ENCODE measurements at regions of chr3 and their contacts with region 1.

Region 1: GRCh38 chr3:194682694-194683310 is 2.9 kb upstream of the FAM43A start:
- DNase-seq: peak; percentile 86
- ATAC-seq: peak; percentile 55
- H3K4me3 ChIP-seq: no peak overlapping the region
- H3K27ac ChIP-seq: no peak overlapping the region
- H3K4me1 ChIP-seq: peaks cover 7% of the 10 kb centered on the region
- H3K27me3 ChIP-seq: no peaks in the 10 kb centered on the region; the same call in 1 of the 2 replicates
- CTCF ChIP-seq: peak; percentile 94
- POLR2A ChIP-seq: 0 out of 2 replicates have a peak, but pooled peaks have one; percentile 27
- RAD21 ChIP-seq: peak; percentile 93

Region 2: DNA sequence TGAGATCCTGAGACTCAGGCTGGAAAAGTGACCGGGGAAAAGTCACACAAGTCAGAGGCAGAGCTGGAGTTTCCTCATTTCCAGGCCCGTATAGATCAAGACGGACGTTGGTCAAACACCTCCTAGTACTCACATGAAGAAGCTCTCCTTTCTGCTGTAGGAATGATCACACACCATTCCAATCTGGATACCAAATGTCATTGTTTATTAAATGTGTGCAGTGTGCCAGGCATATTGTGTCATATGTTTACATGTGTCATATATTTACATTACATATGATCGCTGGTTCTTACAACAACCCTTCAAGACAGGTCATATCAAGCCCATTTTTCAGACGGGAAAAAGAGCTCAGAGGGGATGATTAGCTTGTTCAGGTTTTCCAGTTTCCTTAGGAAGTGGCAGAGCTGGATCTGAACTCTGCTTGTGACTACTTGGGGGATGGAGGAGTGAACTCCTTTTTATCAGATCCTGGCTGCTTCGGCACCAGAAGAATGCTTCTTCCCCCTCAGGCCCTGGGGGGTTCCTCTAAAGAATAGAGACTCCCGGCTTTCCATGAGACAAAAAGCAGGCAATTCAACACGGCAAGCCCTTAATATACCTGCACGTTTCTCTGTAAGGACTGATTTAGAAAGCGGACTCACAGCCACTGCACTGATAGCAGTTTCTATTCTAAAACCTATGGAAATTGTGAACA is 44.8 kb after region 1 on chr3:
- CTCF ChIA-PET with region 1: interaction called, 3 read pairs
- POLR2A ChIA-PET with region 1: no interaction called
- dilution Hi-C with region 1: no loop called
- in situ Hi-C with region 1: no loop called
- intact Hi-C with region 1: loop called (anchors 2 kb)
- DNase-seq: peak; percentile 80
- ATAC-seq: peak; percentile 77
- H3K4me3 ChIP-seq: no peak overlapping the region
- H3K27ac ChIP-seq: peak overlapping the region; percentile 22; the same call in 1 of the 2 replicates
- H3K4me1 ChIP-seq: peaks cover 5% of the 10 kb centered on the region; the same call in 1 of the 2 replicates
- H3K27me3 ChIP-seq: peaks cover 36% of the 10 kb centered on the region
- CTCF ChIP-seq: no peak
- POLR2A ChIP-seq: no peak
- RAD21 ChIP-seq: no peak

Region 3: DNA sequence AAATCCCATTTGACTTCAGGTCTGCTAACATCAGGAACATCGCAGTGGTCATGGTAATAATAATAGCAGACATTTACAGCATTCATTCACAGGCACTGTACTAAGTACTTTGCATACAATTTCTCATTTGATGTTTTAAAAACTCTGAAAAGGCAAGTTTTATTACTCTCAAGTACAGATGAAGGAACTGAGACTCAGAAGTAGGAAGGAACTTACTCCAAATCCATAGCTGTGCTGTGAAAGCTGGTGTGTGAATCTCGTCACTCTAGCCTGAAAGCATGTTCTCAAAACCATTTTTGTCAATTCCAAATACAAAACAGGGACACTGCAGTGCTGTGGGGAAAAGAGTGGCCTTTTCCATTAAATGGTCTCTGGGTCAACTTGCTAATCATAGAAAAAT is 182.8 kb after region 1 on chr3:
- CTCF ChIA-PET with region 1: no interaction called
- POLR2A ChIA-PET with region 1: no interaction called
- dilution Hi-C with region 1: no loop called
- in situ Hi-C with region 1: no loop called
- intact Hi-C with region 1: no loop called
- DNase-seq: no peak
- ATAC-seq: no peak
- H3K4me3 ChIP-seq: no peak overlapping the region
- H3K27ac ChIP-seq: no peak overlapping the region
- H3K4me1 ChIP-seq: no peaks in the 10 kb centered on the region
- H3K27me3 ChIP-seq: peaks cover 15% of the 10 kb centered on the region
- CTCF ChIP-seq: no peak
- POLR2A ChIP-seq: no peak
- RAD21 ChIP-seq: no peak

Region 4: DNA sequence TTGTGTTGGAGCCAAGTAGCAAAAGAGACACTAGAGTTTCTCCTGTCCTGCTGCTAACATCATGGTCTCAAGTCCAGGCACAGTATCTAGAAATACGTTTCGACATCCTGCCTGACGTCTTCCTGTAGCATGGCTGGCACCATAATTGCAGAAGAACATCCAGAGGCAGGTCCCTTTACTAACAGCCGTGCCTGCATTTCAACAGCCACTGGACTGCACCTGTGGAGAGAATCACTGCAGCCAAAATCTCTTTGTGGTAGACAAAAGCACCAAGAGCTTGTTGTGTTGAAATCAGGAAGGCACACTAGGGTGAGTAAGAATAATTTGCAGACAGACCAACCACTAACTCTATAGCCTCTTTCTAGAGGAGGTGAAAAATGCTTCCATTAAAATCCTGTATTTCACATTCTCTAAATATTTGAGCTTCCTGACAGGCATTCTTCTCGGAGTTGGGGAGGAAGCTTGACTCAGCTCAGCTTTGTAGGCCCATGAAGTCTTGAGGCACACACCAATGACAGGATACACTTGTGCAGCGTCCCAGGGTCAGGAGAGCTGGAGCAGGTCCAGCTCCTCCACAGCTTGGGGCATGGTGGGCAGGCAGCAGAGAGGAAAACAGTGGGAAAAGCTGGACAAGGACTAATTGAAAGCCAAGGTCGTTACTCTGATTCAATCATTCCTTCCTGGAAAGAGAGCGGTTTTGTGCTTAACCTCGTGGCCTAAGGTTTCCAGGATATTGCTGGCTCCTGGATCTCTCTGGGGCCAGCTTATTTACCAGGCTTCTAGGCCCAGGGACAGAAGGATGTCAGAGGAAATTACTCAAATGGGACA is 247.8 kb after region 1 on chr3:
- CTCF ChIA-PET with region 1: no interaction called
- POLR2A ChIA-PET with region 1: no interaction called
- dilution Hi-C with region 1: no loop called
- in situ Hi-C with region 1: no loop called
- intact Hi-C with region 1: loop called (anchors 2 kb)
- DNase-seq: peak; percentile 46
- ATAC-seq: peak; percentile 86
- H3K4me3 ChIP-seq: no peak overlapping the region
- H3K27ac ChIP-seq: peak overlapping the region; percentile 39; the same call in 1 of the 2 replicates
- H3K4me1 ChIP-seq: peaks cover 17% of the 10 kb centered on the region
- H3K27me3 ChIP-seq: no peaks in the 10 kb centered on the region; the same call in 1 of the 2 replicates
- CTCF ChIP-seq: no peak
- POLR2A ChIP-seq: no peak
- RAD21 ChIP-seq: no peak

Region 5: GRCh38 chr3:195133462-195133861 is 450.7 kb after region 1 on chr3:
- CTCF ChIA-PET with region 1: interaction called, 11 read pairs
- POLR2A ChIA-PET with region 1: no interaction called
- dilution Hi-C with region 1: no loop called
- in situ Hi-C with region 1: no loop called
- intact Hi-C with region 1: no loop called
- DNase-seq: peak; percentile 98
- ATAC-seq: peak; percentile 92
- H3K4me3 ChIP-seq: no peak overlapping the region
- H3K27ac ChIP-seq: no peak overlapping the region; the same call in 1 of the 2 replicates
- H3K4me1 ChIP-seq: peaks cover 4% of the 10 kb centered on the region
- H3K27me3 ChIP-seq: no peaks in the 10 kb centered on the region
- CTCF ChIP-seq: peak; percentile 32
- POLR2A ChIP-seq: no peak
- RAD21 ChIP-seq: peak; percentile 46

Region 6: GRCh38 chr3:195271116-195271858 is 588.5 kb after region 1 on chr3 and contains the start of gene XXYLT1:
- CTCF ChIA-PET with region 1: interaction called, 24 read pairs
- POLR2A ChIA-PET with region 1: no interaction called
- dilution Hi-C with region 1: no loop called
- in situ Hi-C with region 1: loop called (anchors 5 kb)
- intact Hi-C with region 1: no loop called
- DNase-seq: peak; percentile 80
- ATAC-seq: peak; percentile 89
- H3K4me3 ChIP-seq: peak within 1 kb of the TSS; percentile 93
- H3K27ac ChIP-seq: peak within 1 kb of the TSS; percentile 86
- H3K4me1 ChIP-seq: peaks cover 5% of the 10 kb centered on the region
- H3K27me3 ChIP-seq: no peaks in the 10 kb centered on the region
- CTCF ChIP-seq: peak; percentile 98
- POLR2A ChIP-seq: 0 out of 2 replicates have a peak, but pooled peaks have one; percentile 22
- RAD21 ChIP-seq: peak; percentile 89
- total RNA-seq, gene XXYLT1: 13.1 and 14.7 TPM in 2 replicates

Measured in IMR-90 (cell line).